Activated CD4-positive, alpha-beta memory T cell treated with anti-CD3 and anti-CD28 coated beads, Interleukin-2, amount 10 ng/mL, durations not matched to agents 7 days and 5 days (primary cell): ENCODE measurements at regions of chr10 and their contacts with region 1.

Region 1: GRCh38 chr10:72331601-72332422 is 22.9 kb downstream of the DNAJB12 start:
- DNase-seq: peak; percentile 95
- H3K4me3 Mint-ChIP-seq: peak overlapping the region; percentile 65
- H3K27ac Mint-ChIP-seq: peak overlapping the region; percentile 90
- H3K4me1 Mint-ChIP-seq: peaks cover 95% of the 10 kb centered on the region
- H3K27me3 Mint-ChIP-seq: no peaks in the 10 kb centered on the region

Region 2: GRCh38 chr10:72088889-72089575 is 242.8 kb before region 1 on chr10:
- CTCF ChIA-PET with region 1: interaction called, 17 read pairs
- POLR2A ChIA-PET with region 1: interaction called, 46 read pairs
- DNase-seq: peak; percentile 68
- H3K4me3 Mint-ChIP-seq: peak overlapping the region; percentile 100
- H3K27ac Mint-ChIP-seq: peak overlapping the region; percentile 100
- H3K4me1 Mint-ChIP-seq: peaks cover 54% of the 10 kb centered on the region
- H3K27me3 Mint-ChIP-seq: no peaks in the 10 kb centered on the region

Region 3: GRCh38 chr10:72194949-72195348 is 136.9 kb before region 1 on chr10:
- CTCF ChIA-PET with region 1: no interaction called
- POLR2A ChIA-PET with region 1: no interaction called
- DNase-seq: no peak
- H3K4me3 Mint-ChIP-seq: no peak overlapping the region
- H3K27ac Mint-ChIP-seq: peak overlapping the region; percentile 35
- H3K4me1 Mint-ChIP-seq: no peaks in the 10 kb centered on the region
- H3K27me3 Mint-ChIP-seq: no peaks in the 10 kb centered on the region

Region 4: GRCh38 chr10:72215652-72216549 is 115.9 kb before region 1 on chr10 and contains the starts of genes ANAPC16 and ASCC1:
- CTCF ChIA-PET with region 1: interaction called, 36 read pairs
- POLR2A ChIA-PET with region 1: interaction called, 29 read pairs
- DNase-seq: peak; percentile 94
- H3K4me3 Mint-ChIP-seq: peak within 1 kb of the TSS; percentile 98
- H3K27ac Mint-ChIP-seq: peak within 1 kb of the TSS; percentile 99
- H3K4me1 Mint-ChIP-seq: peaks cover 61% of the 10 kb centered on the region
- H3K27me3 Mint-ChIP-seq: no peaks in the 10 kb centered on the region
- total RNA-seq, gene ANAPC16: 94.2 to 101 TPM
- total RNA-seq, gene ASCC1: 35.5 to 36.2 TPM

Region 5: DNA sequence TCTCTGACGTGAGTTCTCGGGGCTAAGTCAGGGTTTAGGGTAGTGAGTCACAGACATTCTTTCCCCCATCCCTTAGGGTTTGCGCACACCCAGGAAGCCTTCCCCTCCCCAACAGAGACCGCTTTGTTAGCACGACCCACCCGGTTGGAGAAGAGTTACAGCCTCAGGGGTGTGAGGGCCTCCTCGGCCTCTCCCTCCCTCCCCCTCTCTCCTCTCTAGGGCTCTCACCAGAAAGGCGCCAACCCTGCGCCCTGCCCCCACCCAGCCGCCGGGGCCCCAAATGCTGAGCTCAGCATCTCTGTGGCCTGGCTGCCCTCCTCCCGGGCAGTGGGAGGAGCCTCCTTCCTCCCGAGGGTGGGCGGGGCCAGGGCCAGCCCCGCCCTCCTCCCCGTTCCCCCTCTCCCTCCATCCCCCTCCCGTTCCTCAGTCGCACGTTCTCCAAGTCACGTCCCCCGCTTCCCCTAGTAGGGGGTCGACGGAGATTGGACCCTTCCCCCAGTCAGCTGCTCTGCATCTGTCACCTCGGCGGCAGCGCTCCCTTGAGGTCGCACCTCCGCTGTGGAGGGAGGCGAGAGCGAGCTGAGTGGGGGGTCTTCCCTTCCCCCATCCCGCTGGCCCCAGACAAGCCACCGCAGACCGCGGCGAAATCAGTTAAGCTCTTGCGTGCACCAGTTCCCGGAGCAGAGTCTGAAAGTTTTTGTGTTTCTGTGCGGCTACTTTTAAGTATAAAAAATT is 71.1 kb before region 1 on chr10:
- CTCF ChIA-PET with region 1: interaction called, 12 read pairs
- POLR2A ChIA-PET with region 1: interaction called, 48 read pairs
- DNase-seq: peak; percentile 95
- H3K4me3 Mint-ChIP-seq: peak overlapping the region; percentile 79
- H3K27ac Mint-ChIP-seq: peak overlapping the region; percentile 98
- H3K4me1 Mint-ChIP-seq: peaks cover 65% of the 10 kb centered on the region
- H3K27me3 Mint-ChIP-seq: no peaks in the 10 kb centered on the region

Region 6: GRCh38 chr10:72297968-72298773 is 33.6 kb before region 1 on chr10:
- CTCF ChIA-PET with region 1: interaction called, 21 read pairs
- POLR2A ChIA-PET with region 1: interaction called, 64 read pairs
- DNase-seq: peak; percentile 96
- H3K4me3 Mint-ChIP-seq: peak overlapping the region; percentile 73
- H3K27ac Mint-ChIP-seq: peak overlapping the region; percentile 97
- H3K4me1 Mint-ChIP-seq: peaks cover 66% of the 10 kb centered on the region
- H3K27me3 Mint-ChIP-seq: no peaks in the 10 kb centered on the region

Region 7: DNA sequence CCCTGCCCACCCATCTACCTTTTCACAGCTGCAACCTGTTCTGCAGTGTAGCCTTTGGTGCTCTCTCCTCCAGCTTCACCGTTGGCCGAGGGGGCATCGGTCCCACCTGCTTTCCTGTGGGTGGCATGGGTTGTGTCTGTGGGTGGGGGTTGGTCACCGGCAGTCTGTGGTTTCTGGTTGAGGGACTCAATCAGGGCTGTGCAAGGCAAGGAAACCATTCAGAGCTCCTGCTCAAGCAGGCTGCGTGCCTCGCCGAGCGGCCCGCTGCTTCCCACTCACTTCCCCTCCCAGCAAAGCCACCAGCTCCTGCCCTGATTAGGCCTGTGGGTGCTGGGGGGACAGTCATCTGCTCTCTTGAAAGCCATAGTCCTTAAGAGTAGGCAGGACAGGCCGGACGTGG is 13.1 kb after region 1 on chr10:
- CTCF ChIA-PET with region 1: interaction called, 18 read pairs
- POLR2A ChIA-PET with region 1: interaction called, 3 read pairs
- DNase-seq: no peak
- H3K4me3 Mint-ChIP-seq: no peak overlapping the region
- H3K27ac Mint-ChIP-seq: peak overlapping the region; percentile 54
- H3K4me1 Mint-ChIP-seq: peaks cover 32% of the 10 kb centered on the region
- H3K27me3 Mint-ChIP-seq: no peaks in the 10 kb centered on the region